Right ventricle myocardium superior (tissue), 1 donor: ENCODE measurements at regions of chr15 and their contacts with region 1.

Region 1: GRCh38 chr15:41928637-41929620 is 35.1 kb upstream of the SPTBN5 start:
- DNase-seq: peak; percentile 73
- ATAC-seq: peak; percentile 69

Region 2: DNA sequence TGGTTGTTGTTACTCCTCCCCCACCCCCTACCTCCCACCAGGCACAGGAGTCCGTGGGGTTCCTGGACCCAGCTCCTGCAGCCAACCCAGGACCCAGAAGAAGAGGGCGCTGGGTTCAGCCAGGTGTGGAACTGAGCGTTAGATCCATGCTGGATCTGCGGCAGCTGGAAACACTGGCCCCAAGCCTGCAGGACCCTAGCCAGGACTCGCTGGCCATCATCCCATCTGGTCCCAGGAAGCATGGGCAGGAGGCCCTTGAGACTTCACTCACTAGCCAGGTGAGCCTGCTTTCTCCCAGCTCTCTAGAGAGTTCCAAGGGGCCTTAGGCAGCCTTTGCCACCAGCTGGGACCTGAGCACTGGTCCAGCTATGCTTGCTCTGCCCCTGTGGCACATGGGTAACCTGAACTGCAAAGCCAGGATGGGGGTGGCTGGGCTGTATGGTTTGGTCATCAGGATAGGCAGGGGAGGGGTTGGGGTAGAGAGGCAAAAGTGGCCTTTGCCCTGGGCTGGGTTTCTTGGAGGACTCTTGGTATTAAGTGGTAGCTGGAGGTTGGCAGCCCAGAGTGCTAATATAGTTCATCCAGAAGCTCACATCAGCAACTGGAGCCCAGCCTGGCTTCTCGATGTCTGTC is 108.0 kb before region 1 on chr15:
- intact Hi-C with region 1: no loop called
- DNase-seq: peak; percentile 29
- ATAC-seq: no peak

Region 3: GRCh38 chr15:41961001-41961518 is 32.1 kb after region 1 on chr15:
- intact Hi-C with region 1: loop called (anchors 5 kb)
- DNase-seq: no peak
- ATAC-seq: no peak

Region 4: GRCh38 chr15:42069496-42070278 is 140.8 kb after region 1 on chr15:
- intact Hi-C with region 1: no loop called
- DNase-seq: no peak
- ATAC-seq: no peak